ENCODE measurements at regions of chr10 and their contacts with region 1.

Region 1: GRCh38 chr10:13518076-13518692 is 10.6 kb downstream of the BEND7 start:
- DNase-seq: no peak
- ATAC-seq: peak in 3 of 4 donors; percentile 44 to 59 (median 48)
- H3K4me3 ChIP-seq: peak overlapping the region in 1 of 12 donors; percentile 15
- H3K27ac ChIP-seq: no peak overlapping the region
- H3K4me1 ChIP-seq: peaks cover 0 to 6% (median 0%) of the 10 kb centered on the region in 12 donors
- H3K27me3 ChIP-seq: no peaks in the 10 kb centered on the region
- CTCF ChIP-seq: peak in 9 of 12 donors; percentile 6 to 40 (median 24)
- POLR2A ChIP-seq: no peak

Region 2: GRCh38 chr10:13440185-13441061 is 77.8 kb before region 1 on chr10:
- intact Hi-C with region 1: loop called in 1 of 10 experiments (anchors 5 kb)
- DNase-seq: peak; percentile 21 to 68 (median 45)
- ATAC-seq: peak; percentile 49 to 93 (median 82)
- H3K4me3 ChIP-seq: peak overlapping the region in 11 of 12 donors; percentile 1 to 50 (median 36)
- H3K27ac ChIP-seq: no peak overlapping the region
- H3K4me1 ChIP-seq: peaks cover 0 to 15% (median 13%) of the 10 kb centered on the region in 12 donors
- H3K27me3 ChIP-seq: peaks cover 0 to 29% (median 12%) of the 10 kb centered on the region in 9 donors
- CTCF ChIP-seq: peak; percentile 73 to 94 (median 85)
- POLR2A ChIP-seq: no peak

Region 3: GRCh38 chr10:13492493-13493175 is 25.6 kb before region 1 on chr10:
- intact Hi-C with region 1: loop called in 1 of 10 experiments (anchors 2 kb)
- DNase-seq: no peak
- ATAC-seq: no peak
- H3K4me3 ChIP-seq: peak overlapping the region in 5 of 12 donors; percentile 3 to 34 (median 13)
- H3K27ac ChIP-seq: peak overlapping the region in 1 of 12 donors; percentile 15
- H3K4me1 ChIP-seq: no peaks in the 10 kb centered on the region
- H3K27me3 ChIP-seq: no peaks in the 10 kb centered on the region
- CTCF ChIP-seq: no peak
- POLR2A ChIP-seq: no peak

Region 4: GRCh38 chr10:13586676-13587355 is 68.6 kb after region 1 on chr10 and contains the start of gene PRPF18:
- intact Hi-C with region 1: no loop called
- DNase-seq: peak; percentile 91 to 95 (median 95)
- ATAC-seq: peak; percentile 97 to 100 (median 100)
- H3K4me3 ChIP-seq: peak within 1 kb of the TSS; percentile 51 to 95 (median 78)
- H3K27ac ChIP-seq: peak within 1 kb of the TSS in 8 of 12 donors; percentile 22 to 76 (median 58)
- H3K4me1 ChIP-seq: peaks cover 0 to 22% (median 11%) of the 10 kb centered on the region in 12 donors
- H3K27me3 ChIP-seq: peaks cover 0 to 32% (median 4%) of the 10 kb centered on the region in 9 donors
- CTCF ChIP-seq: peak; percentile 86 to 100 (median 98)
- POLR2A ChIP-seq: peak in 1 of 2 donors; percentile 42
- total RNA-seq, gene PRPF18: 12.3 to 16.3 (median 14.7) TPM